ENCODE measurements at regions of chr10 and their contacts with region 1.

Region 1: GRCh38 chr10:99612167-99612831 is 7.9 kb downstream of the SLC25A28 start:
- DNase-seq: peak in 1 of 2 donors; percentile 76
- ATAC-seq: peak; percentile 67 to 77 (median 71)
- H3K4me3 ChIP-seq: no peak overlapping the region
- H3K4me3 Mint-ChIP-seq: no peak overlapping the region
- H3K27ac ChIP-seq: no peak overlapping the region
- H3K27ac Mint-ChIP-seq: peak overlapping the region; percentile 47 to 66
- H3K4me1 ChIP-seq: no peaks in the 10 kb centered on the region
- H3K4me1 Mint-ChIP-seq: peaks cover 17 to 22% of the 10 kb centered on the region in 2 donors
- H3K27me3 ChIP-seq: no peaks in the 10 kb centered on the region
- H3K27me3 Mint-ChIP-seq: no peaks in the 10 kb centered on the region
- CTCF ChIP-seq: peak; percentile 94

Region 2: GRCh38 chr10:98467506-98468346 is 1144.6 kb before region 1 on chr10:
- intact Hi-C with region 1: loop called (anchors 5 kb)
- DNase-seq: peak; percentile 48 to 91
- ATAC-seq: peak; percentile 93 to 97 (median 97)
- H3K4me3 ChIP-seq: peak overlapping the region; percentile 85
- H3K4me3 Mint-ChIP-seq: peak overlapping the region; percentile 97
- H3K27ac ChIP-seq: peak overlapping the region; percentile 34
- H3K27ac Mint-ChIP-seq: peak overlapping the region; percentile 68 to 87
- H3K4me1 ChIP-seq: peaks cover 11% of the 10 kb centered on the region
- H3K4me1 Mint-ChIP-seq: peaks cover 8 to 15% of the 10 kb centered on the region in 2 donors
- H3K27me3 ChIP-seq: no peaks in the 10 kb centered on the region
- H3K27me3 Mint-ChIP-seq: peaks cover 13 to 14% of the 10 kb centered on the region in 2 donors
- CTCF ChIP-seq: peak; percentile 87

Region 3: DNA sequence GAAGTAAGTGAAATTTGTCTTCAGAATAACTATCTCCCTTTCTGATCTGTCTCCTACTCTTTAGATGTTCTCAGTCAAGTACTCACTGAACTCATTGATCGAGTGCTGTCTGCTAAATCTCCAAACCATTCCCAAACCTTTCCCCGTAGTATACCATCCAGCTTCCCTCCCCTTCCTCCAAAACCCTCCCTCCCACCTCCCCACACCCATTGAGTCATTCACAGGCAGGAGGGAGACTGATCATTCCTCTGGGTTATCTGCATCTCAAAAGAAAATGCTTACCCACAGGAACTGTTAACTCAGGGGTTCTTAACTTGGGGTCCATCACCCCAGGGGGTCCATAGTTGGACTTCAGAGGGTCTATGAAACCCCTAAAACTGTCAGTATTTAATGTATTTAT is 219.3 kb before region 1 on chr10:
- intact Hi-C with region 1: loop called (anchors 2 kb)
- DNase-seq: no peak
- ATAC-seq: no peak
- H3K4me3 ChIP-seq: no peak overlapping the region
- H3K4me3 Mint-ChIP-seq: no peak overlapping the region
- H3K27ac ChIP-seq: no peak overlapping the region
- H3K27ac Mint-ChIP-seq: no peak overlapping the region
- H3K4me1 ChIP-seq: peaks cover 2% of the 10 kb centered on the region
- H3K4me1 Mint-ChIP-seq: peaks cover 0 to 5% of the 10 kb centered on the region in 2 donors
- H3K27me3 ChIP-seq: no peaks in the 10 kb centered on the region
- H3K27me3 Mint-ChIP-seq: no peaks in the 10 kb centered on the region
- CTCF ChIP-seq: no peak

Region 4: DNA sequence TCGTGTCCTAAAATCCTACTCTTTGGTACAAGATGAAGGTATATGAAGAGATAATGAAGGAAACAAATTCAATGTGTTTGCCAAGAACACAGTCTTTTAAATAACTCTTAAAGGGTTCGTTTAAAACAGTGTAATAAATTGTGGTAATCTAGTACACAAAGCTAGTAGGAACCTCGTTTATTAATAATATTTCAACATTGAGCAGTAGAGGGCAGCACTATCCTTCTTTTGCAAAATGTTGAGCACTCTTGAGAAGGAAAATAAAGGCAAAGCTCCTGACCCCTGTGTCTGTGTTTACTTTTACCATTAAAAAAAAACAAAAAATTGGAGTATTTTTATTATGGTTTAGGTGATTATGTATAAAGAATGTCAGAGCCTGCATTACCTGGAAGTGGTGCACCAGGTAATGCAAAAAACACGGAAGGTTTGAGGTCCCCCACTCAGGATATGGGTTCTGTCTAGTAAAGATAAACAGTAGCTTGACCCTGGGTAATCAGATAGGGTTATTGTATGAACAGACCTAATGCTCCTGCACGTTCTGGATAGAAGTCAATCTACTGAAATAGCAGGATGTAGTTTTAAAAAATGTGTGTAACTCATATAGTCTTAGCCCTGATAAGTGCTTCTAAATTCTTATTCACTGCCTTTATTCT is 176.2 kb before region 1 on chr10:
- intact Hi-C with region 1: loop called (anchors 5 kb)
- DNase-seq: peak in 1 of 2 donors; percentile 64
- ATAC-seq: peak; percentile 55 to 77 (median 67)
- H3K4me3 ChIP-seq: no peak overlapping the region
- H3K4me3 Mint-ChIP-seq: no peak overlapping the region
- H3K27ac ChIP-seq: no peak overlapping the region
- H3K27ac Mint-ChIP-seq: no peak overlapping the region
- H3K4me1 ChIP-seq: peaks cover 5% of the 10 kb centered on the region
- H3K4me1 Mint-ChIP-seq: peaks cover 17 to 19% of the 10 kb centered on the region in 2 donors
- H3K27me3 ChIP-seq: no peaks in the 10 kb centered on the region
- H3K27me3 Mint-ChIP-seq: no peaks in the 10 kb centered on the region
- CTCF ChIP-seq: peak; percentile 70

Region 5: DNA sequence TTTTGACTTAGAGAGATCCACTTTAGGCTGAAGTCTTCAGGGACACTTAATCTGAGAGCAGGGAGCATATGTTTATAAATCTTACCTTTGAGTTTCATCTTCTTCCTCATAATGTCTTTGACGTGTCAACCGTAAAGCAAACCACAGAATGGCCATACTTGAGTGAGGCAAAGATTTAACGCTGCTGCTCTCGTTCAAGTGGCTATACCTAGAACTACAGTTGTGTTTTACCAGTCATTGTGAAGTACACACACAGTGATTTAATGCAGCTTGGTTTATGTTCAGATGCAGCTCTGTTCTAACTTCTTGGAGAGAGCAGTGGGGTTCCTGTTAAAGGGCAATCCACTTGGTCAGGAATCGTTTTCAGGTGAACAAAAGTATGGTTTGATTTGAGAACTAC is 142.0 kb before region 1 on chr10:
- intact Hi-C with region 1: no loop called
- DNase-seq: no peak
- ATAC-seq: no peak
- H3K4me3 ChIP-seq: no peak overlapping the region
- H3K4me3 Mint-ChIP-seq: no peak overlapping the region
- H3K27ac ChIP-seq: no peak overlapping the region
- H3K27ac Mint-ChIP-seq: no peak overlapping the region
- H3K4me1 ChIP-seq: no peaks in the 10 kb centered on the region
- H3K4me1 Mint-ChIP-seq: no peaks in the 10 kb centered on the region
- H3K27me3 ChIP-seq: peaks cover 3% of the 10 kb centered on the region
- H3K27me3 Mint-ChIP-seq: peaks cover 10 to 25% of the 10 kb centered on the region in 2 donors
- CTCF ChIP-seq: no peak

Region 6: DNA sequence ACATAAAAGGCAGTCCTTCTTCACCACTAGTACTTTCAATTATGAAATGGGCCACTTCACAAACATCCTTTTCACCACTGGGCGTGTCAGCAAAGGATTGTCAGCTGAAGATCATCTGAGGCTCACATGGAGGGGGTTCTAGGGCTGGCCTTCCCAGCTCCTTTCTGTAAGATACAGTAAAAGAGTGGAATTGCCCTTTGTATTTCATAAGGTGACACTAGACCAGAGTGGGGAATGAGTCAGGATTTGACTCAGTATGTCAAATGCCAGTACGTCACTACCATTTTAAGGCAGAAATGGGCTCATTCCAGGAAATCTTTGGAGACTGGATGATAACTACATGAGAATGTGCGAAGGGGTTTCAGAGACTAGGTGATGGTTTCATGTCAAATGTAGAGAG is 695.4 kb after region 1 on chr10:
- intact Hi-C with region 1: no loop called
- DNase-seq: no peak
- ATAC-seq: no peak
- H3K4me3 ChIP-seq: no peak overlapping the region
- H3K4me3 Mint-ChIP-seq: no peak overlapping the region
- H3K27ac ChIP-seq: no peak overlapping the region
- H3K27ac Mint-ChIP-seq: no peak overlapping the region
- H3K4me1 ChIP-seq: no peaks in the 10 kb centered on the region
- H3K4me1 Mint-ChIP-seq: no peaks in the 10 kb centered on the region
- H3K27me3 ChIP-seq: peaks cover 6% of the 10 kb centered on the region
- H3K27me3 Mint-ChIP-seq: peaks cover 27 to 47% of the 10 kb centered on the region in 2 donors
- CTCF ChIP-seq: no peak